Activated naive CD4-positive, alpha-beta T cell treated with anti-CD3 and anti-CD28 coated beads for 36 hours (primary cell): ENCODE measurements at regions of chr6 and their contacts with region 1.

Region 1: DNA sequence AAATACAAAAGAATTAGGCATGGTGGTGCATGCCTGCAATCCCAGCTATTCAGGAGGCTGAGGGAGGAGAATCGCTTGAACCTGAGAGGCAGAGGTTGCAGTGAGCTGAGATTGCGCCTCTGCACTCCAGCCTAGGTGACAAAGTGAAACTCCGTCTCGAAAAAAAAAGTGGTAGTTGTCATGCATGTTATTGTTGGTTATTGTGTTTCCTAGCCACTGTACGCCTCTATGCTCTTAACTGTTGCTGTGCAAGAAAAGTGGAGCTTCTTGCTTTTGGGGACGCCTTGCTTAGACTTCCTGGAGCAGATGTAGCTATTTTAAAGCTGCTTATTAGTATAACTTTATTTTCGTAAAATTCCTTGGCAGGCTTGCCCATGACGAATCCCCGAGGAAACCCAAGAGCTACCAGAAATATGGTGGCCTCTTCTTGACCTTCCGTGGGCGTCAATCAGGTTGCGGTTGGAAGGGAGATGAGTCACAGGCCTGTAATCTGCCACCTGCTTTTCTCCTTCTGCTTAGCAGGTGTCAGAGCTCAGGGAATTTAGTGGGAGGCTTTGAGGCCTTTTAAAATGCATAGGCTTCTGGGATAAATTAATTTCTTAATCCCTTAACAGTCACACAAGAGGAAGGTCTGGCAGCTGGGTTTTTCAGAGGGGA is 17.3 kb downstream of the GABRR2 start:
- DNase-seq: peak; percentile 83
- H3K4me3 Mint-ChIP-seq: peak overlapping the region; percentile 7
- H3K27ac Mint-ChIP-seq: peak overlapping the region; percentile 46
- H3K4me1 Mint-ChIP-seq: peaks cover 18% of the 10 kb centered on the region
- H3K27me3 Mint-ChIP-seq: no peaks in the 10 kb centered on the region

Region 2: GRCh38 chr6:88574021-88574420 is 723.8 kb before region 1 on chr6:
- CTCF ChIA-PET with region 1: no interaction called
- intact Hi-C with region 1: no loop called
- DNase-seq: no peak
- H3K4me3 Mint-ChIP-seq: no peak overlapping the region
- H3K27ac Mint-ChIP-seq: no peak overlapping the region
- H3K4me1 Mint-ChIP-seq: no peaks in the 10 kb centered on the region
- H3K27me3 Mint-ChIP-seq: peaks cover 6% of the 10 kb centered on the region

Region 3: DNA sequence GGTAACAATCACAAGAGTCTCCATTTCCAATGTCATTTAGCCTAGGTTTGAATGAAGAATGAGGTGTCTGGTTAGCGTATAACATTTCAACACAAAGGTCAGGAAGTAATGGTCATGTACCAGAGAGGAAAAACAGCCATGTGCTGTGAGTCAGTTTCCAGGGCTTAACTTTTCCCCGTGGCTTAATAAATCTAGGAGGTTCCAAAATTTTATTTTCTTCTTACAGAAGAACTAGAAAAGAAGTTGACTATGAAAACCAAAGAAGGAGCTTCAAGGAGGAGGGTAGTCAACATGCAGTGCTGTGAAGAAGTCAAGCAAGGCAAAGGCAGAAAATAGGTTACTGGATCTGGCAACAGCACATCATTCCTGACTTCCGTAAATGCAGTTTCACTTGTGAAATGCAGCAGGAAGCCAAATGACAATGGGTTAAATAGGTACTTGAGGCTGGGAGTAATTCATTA is 25.7 kb after region 1 on chr6:
- CTCF ChIA-PET with region 1: no interaction called
- intact Hi-C with region 1: no loop called
- DNase-seq: no peak
- H3K4me3 Mint-ChIP-seq: no peak overlapping the region
- H3K27ac Mint-ChIP-seq: no peak overlapping the region
- H3K4me1 Mint-ChIP-seq: no peaks in the 10 kb centered on the region
- H3K27me3 Mint-ChIP-seq: no peaks in the 10 kb centered on the region

Region 4: DNA sequence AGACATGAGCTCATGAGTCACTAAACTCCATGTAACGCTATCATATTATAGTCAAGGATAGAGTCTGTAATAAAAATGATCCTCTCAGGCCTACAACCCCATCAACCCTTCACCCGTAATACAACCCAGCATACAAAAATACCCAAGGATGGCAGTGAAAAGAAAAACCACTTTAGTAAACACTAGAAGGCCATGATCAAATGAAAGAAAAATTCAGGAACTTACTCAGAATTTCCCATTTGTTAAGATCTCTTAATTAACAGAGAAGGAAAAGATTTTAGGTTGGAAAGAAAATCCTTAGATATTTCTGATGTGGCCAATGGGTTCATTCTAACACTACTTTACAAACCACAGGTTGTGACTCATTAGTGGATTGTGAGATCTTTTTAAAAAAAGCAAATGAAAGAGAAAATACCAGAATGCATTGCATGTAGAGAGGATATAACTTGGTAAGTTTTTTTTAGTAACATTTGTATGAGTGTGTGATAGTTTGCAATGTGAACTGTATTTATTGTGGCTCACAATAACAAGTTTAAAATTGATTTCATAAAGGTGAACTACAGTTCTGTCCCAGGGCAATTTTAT is 62.7 kb after region 1 on chr6:
- CTCF ChIA-PET with region 1: no interaction called
- intact Hi-C with region 1: loop called (anchors 2 kb)
- DNase-seq: no peak
- H3K4me3 Mint-ChIP-seq: no peak overlapping the region
- H3K27ac Mint-ChIP-seq: peak overlapping the region; percentile 67
- H3K4me1 Mint-ChIP-seq: peaks cover 61% of the 10 kb centered on the region
- H3K27me3 Mint-ChIP-seq: no peaks in the 10 kb centered on the region